Right cardiac atrium (tissue), 5 donors: ENCODE measurements at regions of chr12 and their contacts with region 1.

Region 1: DNA sequence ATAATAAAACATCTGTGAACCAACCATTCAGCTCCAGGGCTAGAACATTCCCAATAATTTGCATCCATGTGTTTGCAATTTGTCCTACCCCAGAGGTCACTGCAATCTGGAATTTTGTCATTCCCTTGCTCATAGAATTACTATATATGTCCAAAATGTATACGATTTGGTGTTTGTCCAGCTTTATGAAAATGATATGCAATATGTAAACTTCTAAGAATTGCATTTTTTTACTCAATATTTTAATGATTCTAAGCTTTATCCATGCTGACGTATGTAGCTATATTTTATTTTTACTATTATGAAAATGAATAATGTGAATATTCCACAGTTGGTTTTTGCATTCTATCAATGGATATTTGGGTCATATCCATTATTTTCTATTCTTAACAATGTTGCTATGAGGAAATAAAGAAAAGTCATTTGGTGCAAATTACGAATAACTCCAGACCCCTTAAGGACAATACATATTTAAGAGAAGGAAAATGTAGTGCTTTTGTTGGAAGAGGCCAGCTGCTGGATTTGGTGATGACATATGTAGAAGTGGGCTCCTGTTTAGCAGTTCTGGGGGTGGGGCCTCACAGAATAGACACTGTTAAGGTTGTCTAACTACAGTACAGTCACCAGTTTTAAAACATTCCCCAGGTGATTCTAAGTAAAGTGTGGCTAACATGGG is 139.4 kb downstream of the SLC38A4 start:
- DNase-seq: no peak
- ATAC-seq: no peak
- H3K4me3 ChIP-seq: no peak overlapping the region
- H3K27ac ChIP-seq: no peak overlapping the region
- H3K4me1 ChIP-seq: no peaks in the 10 kb centered on the region
- H3K27me3 ChIP-seq: no peaks in the 10 kb centered on the region

Region 2: GRCh38 chr12:46921048-46921763 is 234.8 kb after region 1 on chr12:
- intact Hi-C with region 1: loop called in 1 of 4 experiments (anchors 10 kb)
- DNase-seq: no peak
- ATAC-seq: no peak
- H3K4me3 ChIP-seq: no peak overlapping the region
- H3K27ac ChIP-seq: no peak overlapping the region
- H3K4me1 ChIP-seq: no peaks in the 10 kb centered on the region
- H3K27me3 ChIP-seq: no peaks in the 10 kb centered on the region